Posterior vena cava (tissue), 2 donors: ENCODE measurements at regions of chr5 and their contacts with region 1.

Region 1: DNA sequence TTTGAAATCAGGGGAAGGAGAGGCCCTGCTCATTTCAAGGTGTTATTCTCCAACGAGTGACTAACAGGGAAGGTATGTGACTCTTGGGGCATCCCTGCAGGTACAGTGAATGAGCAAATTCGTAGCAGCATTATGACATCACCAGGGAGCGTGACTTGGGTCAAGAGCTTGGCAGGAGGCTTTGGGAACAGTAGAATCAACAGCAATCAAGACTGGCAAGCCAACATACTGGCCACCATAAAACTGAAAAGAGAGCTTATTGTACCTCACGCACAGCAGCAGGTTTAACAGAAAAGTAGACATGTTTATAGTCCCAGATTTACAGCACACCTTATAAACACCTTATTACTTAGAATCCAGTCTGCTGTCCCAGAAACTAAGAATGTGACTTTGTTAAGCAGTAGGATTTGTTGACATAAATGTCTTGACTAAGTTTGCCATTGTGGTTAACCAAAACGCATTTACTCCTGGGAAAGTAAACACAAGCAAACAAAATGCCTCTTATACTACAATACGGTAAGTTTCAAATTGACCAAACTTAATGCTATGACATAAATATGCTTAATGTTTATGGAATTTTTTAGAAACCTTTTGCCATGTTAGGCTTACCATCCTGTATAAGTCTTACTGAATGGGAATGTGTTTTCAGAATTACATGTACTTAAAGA is 297.8 kb downstream of the NPR3 start:
- DNase-seq: no peak

Region 2: DNA sequence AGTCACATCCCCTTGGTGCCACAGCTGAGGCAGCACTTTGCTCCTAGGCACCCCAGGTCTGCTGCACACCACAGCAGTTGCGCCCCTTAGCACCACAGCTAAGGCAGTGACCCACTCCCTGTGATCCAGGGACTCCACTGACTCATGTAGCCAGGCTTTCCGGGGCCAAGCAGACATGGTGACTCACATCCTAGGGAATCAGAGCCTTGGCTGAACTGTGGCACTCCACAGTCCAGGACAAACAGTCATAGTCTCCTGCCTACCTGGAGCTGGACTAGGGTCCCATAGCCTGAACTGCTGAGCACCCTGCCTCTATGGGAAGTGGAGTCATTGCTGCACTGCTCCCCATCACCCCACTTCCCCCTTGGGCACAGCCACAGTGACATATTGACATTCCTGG is 41.0 kb after region 1 on chr5:
- intact Hi-C with region 1: no loop called
- DNase-seq: no peak

Region 3: DNA sequence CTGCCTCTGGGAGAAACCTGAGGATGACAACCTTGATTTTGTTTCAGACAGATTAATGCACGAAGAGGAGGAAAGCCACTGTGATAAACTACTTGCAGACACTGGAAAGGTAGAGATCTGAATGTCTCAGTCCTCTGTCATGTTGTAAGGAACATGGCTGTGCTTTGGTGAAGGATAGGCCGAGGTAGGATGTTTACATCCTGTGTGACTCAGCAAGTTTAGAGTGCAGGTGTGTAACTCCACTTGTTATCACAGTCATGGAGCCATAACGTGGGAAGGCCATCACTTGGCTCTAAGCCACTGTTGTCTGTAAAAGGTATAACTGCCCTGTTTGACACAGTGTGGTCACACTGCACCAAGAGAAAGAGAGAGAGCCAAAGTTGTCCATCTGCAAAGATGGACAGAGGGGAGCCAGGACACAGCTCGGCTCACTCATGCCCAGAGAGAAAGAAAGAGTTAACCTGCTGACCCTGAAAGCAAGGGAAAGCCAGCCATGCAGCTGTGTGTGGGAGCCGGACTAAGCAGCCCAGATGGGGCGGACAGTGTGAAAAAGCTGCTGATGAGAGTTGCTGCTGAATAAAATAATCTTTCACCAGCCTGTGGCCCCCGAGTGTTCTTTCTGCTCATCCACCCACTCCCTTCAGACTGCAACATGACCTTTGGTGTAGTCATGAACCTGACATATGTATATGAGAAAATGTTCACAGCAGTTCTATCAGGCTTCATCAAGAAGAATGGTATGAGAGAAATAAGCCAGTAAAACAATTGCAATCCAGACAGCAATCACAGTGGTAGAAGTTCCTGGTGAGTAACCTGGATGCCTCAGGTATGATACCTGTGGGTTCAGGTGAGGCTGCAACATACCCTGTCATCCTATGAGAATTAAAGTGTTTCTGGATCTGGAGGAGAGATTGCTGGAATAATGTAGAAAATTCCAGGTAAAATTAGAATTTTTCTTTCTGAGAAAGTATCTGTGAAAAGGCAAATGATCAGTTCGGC is 547.7 kb after region 1 on chr5:
- intact Hi-C with region 1: no loop called
- DNase-seq: no peak

Region 4: GRCh38 chr5:33755231-33755630 is 746.3 kb after region 1 on chr5:
- intact Hi-C with region 1: loop called in 1 of 2 experiments (anchors 5 kb)
- DNase-seq: no peak